PC-9 (cell line): ENCODE measurements at regions of chr3 and their contacts with region 1.

Region 1: GRCh38 chr3:150408221-150409102 is at the start of gene TSC22D2:
- DNase-seq: peak; percentile 79 to 97
- H3K4me3 ChIP-seq: peak within 1 kb of the TSS; percentile 69
- H3K27ac ChIP-seq: peak within 1 kb of the TSS; percentile 97
- H3K4me1 ChIP-seq: peaks cover 17% of the 10 kb centered on the region
- H3K27me3 ChIP-seq: no peaks in the 10 kb centered on the region
- CTCF ChIP-seq: 0 out of 2 replicates have a peak, but pooled peaks have one; percentile 18
- total RNA-seq, gene TSC22D2: 20.5 and 32.0 TPM in 2 replicates

Region 2: DNA sequence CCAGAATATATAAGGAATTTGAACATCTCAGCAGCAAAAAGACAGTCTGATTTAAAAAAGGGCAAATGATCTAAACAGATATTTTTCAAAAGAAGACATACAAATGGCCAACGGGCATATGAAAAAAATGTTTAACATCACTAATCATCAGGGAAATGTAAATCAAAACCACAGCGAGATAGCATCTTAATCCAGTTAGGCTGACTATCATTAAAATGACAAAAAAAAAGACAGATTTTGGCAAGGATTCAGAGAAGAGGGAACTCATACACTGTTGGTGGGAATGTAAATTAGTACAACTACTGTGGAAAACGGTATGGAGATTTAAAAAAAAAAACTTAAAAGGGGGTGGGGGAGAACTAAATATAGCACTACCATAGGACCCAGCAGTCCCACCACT is 547.6 kb before region 1 on chr3:
- CTCF ChIA-PET with region 1: no interaction called
- POLR2A ChIA-PET with region 1: interaction called, 16 read pairs
- intact Hi-C with region 1: no loop called
- DNase-seq: no peak
- H3K4me3 ChIP-seq: no peak overlapping the region
- H3K27ac ChIP-seq: no peak overlapping the region
- H3K4me1 ChIP-seq: no peaks in the 10 kb centered on the region
- H3K27me3 ChIP-seq: no peaks in the 10 kb centered on the region
- CTCF ChIP-seq: no peak

Region 3: GRCh38 chr3:150210461-150211110 is 197.9 kb before region 1 on chr3:
- CTCF ChIA-PET with region 1: no interaction called
- POLR2A ChIA-PET with region 1: interaction called, 12 read pairs
- intact Hi-C with region 1: no loop called
- DNase-seq: no peak
- H3K4me3 ChIP-seq: no peak overlapping the region
- H3K27ac ChIP-seq: no peak overlapping the region
- H3K4me1 ChIP-seq: no peaks in the 10 kb centered on the region; the same call in 1 of the 2 replicates
- H3K27me3 ChIP-seq: no peaks in the 10 kb centered on the region
- CTCF ChIP-seq: no peak

Region 4: GRCh38 chr3:150248116-150248887 is 160.2 kb before region 1 on chr3:
- CTCF ChIA-PET with region 1: interaction called, 15 read pairs
- POLR2A ChIA-PET with region 1: interaction called, 9 read pairs
- intact Hi-C with region 1: no loop called
- DNase-seq: peak in 1 of 2 experiments; percentile 25
- H3K4me3 ChIP-seq: no peak overlapping the region
- H3K27ac ChIP-seq: no peak overlapping the region
- H3K4me1 ChIP-seq: peaks cover 12% of the 10 kb centered on the region
- H3K27me3 ChIP-seq: no peaks in the 10 kb centered on the region
- CTCF ChIP-seq: no peak

Region 5: DNA sequence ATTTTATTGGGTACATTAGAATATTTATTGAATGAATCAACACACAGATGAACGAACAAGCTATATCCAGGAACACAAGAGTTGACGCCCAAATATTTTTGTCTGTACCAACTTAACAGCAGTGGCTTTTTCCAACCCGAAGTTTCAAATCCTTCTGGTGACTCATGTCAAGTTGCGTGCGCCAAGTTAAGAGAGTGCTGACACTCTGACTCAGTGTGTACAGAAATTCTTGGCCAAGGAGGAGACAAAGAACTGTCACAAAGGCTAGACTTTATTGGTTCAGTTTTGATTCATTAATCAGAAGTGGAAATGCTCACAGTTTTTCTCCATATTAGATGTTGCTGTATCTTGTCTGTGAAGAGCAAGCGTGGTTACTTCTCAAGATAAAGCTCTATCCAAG is 60.0 kb before region 1 on chr3:
- CTCF ChIA-PET with region 1: interaction called, 6 read pairs
- POLR2A ChIA-PET with region 1: interaction called, 4 read pairs
- intact Hi-C with region 1: loop called (anchors 1 kb)
- DNase-seq: peak; percentile 64 to 98
- H3K4me3 ChIP-seq: no peak overlapping the region; the same call in 1 of the 2 replicates
- H3K27ac ChIP-seq: peak overlapping the region; percentile 87
- H3K4me1 ChIP-seq: peaks cover 69% of the 10 kb centered on the region
- H3K27me3 ChIP-seq: no peaks in the 10 kb centered on the region
- CTCF ChIP-seq: no peak

Region 6: GRCh38 chr3:150421799-150422548 is 13.5 kb after region 1 on chr3:
- CTCF ChIA-PET with region 1: no interaction called
- POLR2A ChIA-PET with region 1: no interaction called
- intact Hi-C with region 1: no loop called
- DNase-seq: peak in 1 of 2 experiments; percentile 10
- H3K4me3 ChIP-seq: no peak overlapping the region
- H3K27ac ChIP-seq: peak overlapping the region; percentile 10; the same call in 1 of the 2 replicates
- H3K4me1 ChIP-seq: peaks cover 53% of the 10 kb centered on the region
- H3K27me3 ChIP-seq: no peaks in the 10 kb centered on the region
- CTCF ChIP-seq: no peak

Region 7: DNA sequence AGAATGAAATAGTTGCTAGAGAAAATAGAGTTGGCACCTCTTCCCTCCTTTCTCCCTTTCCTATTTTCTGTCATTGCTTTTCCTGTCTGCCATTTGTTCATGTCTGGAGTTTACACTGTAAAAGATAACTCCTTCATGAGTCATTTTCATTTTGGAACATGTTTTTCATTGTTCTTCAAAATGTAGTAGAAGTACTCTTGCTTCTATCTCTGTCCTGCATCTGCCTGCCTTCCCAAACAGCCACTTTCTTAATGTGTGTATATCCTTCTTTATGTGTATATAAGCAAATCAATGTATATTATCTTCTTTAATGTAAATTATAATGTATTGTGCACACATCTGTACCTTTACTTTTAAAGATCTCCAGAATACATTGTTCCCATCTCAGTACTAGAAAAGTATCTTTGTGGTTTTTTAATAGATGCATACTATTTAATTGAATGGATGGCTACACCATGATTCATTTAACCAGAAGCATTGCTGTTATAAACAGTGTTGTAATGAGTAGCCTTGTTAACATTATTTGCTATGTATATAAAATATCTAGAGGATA is 40.8 kb after region 1 on chr3:
- CTCF ChIA-PET with region 1: no interaction called
- POLR2A ChIA-PET with region 1: interaction called, 10 read pairs
- intact Hi-C with region 1: no loop called
- DNase-seq: peak in 1 of 2 experiments; percentile 60
- H3K4me3 ChIP-seq: no peak overlapping the region
- H3K27ac ChIP-seq: 0 out of 2 replicates have a peak overlapping the region, but pooled peaks have one; percentile 25
- H3K4me1 ChIP-seq: peaks cover 52% of the 10 kb centered on the region
- H3K27me3 ChIP-seq: no peaks in the 10 kb centered on the region
- CTCF ChIP-seq: no peak

Region 8: GRCh38 chr3:150546226-150547044 is 138.0 kb after region 1 on chr3 and contains the starts of genes EIF2A and SERP1:
- CTCF ChIA-PET with region 1: interaction called, 3 read pairs
- POLR2A ChIA-PET with region 1: interaction called, 3 read pairs
- intact Hi-C with region 1: loop called (anchors 5 kb)
- DNase-seq: peak; percentile 96 to 99
- H3K4me3 ChIP-seq: peak within 1 kb of the TSS; percentile 82
- H3K27ac ChIP-seq: peak within 1 kb of the TSS; percentile 93
- H3K4me1 ChIP-seq: peaks cover 27% of the 10 kb centered on the region
- H3K27me3 ChIP-seq: no peaks in the 10 kb centered on the region
- CTCF ChIP-seq: no peak
- total RNA-seq, gene EIF2A: 96.4 and 102 TPM in 2 replicates
- total RNA-seq, gene SERP1: 106 and 113 TPM in 2 replicates